Activated T-helper 2 cell treated with anti-CD3 and anti-CD28 coated beads, Interferon-gamma antibody, Interleukin-2, Interleukin-4, amounts not matched to agents 10 μg/mL and 5 μg/mL and 100 μg/mL, durations not matched to agents 14 hours and 24 hours and 36 hours (primary cell): ENCODE measurements at regions of chr1 and their contacts with region 1.

Region 1: GRCh38 chr1:183655562-183656075 is 2.5 kb upstream of the APOBEC4 start:
- DNase-seq: peak; percentile 44
- H3K4me3 Mint-ChIP-seq: no peak overlapping the region
- H3K27ac Mint-ChIP-seq: no peak overlapping the region
- H3K4me1 Mint-ChIP-seq: peaks cover 38% of the 10 kb centered on the region
- H3K27me3 Mint-ChIP-seq: no peaks in the 10 kb centered on the region

Region 2: GRCh38 chr1:183590244-183591191 is 65.1 kb before region 1 on chr1 and contains the start of gene NCF2:
- intact Hi-C with region 1: no loop called
- DNase-seq: peak; percentile 56
- H3K4me3 Mint-ChIP-seq: peak within 1 kb of the TSS; percentile 37
- H3K27ac Mint-ChIP-seq: peak within 1 kb of the TSS; percentile 21
- H3K4me1 Mint-ChIP-seq: peaks cover 43% of the 10 kb centered on the region
- H3K27me3 Mint-ChIP-seq: no peaks in the 10 kb centered on the region
- total RNA-seq, gene NCF2: 2.2 and 2.6 TPM in 2 replicates

Region 3: GRCh38 chr1:183685112-183685713 is 29.6 kb after region 1 on chr1:
- intact Hi-C with region 1: loop called (anchors 2 kb)
- DNase-seq: no peak
- H3K4me3 Mint-ChIP-seq: no peak overlapping the region
- H3K27ac Mint-ChIP-seq: no peak overlapping the region
- H3K4me1 Mint-ChIP-seq: peaks cover 1% of the 10 kb centered on the region
- H3K27me3 Mint-ChIP-seq: peaks cover 34% of the 10 kb centered on the region

Region 4: DNA sequence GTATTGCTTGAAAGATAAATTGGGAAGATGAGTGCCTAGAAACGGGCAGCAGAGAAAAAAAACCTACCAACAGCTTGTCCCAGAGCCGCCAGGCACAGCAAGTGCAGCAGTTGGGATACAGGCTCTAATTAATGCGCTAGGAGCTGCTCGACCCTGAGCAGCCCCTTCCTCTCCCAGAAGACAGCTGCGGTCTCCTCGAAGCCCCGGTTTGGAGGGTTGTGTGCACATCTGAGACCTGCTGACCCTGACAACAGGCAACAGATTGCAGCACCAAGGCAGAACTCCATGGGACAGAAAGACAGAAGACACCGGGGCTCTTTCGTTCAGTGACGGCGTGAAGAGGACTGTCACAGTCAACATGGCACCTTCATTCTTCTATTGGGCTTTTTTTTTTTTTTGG is 497.4 kb after region 1 on chr1:
- intact Hi-C with region 1: no loop called
- DNase-seq: no peak
- H3K4me3 Mint-ChIP-seq: no peak overlapping the region
- H3K27ac Mint-ChIP-seq: no peak overlapping the region
- H3K4me1 Mint-ChIP-seq: peaks cover 10% of the 10 kb centered on the region
- H3K27me3 Mint-ChIP-seq: peaks cover 26% of the 10 kb centered on the region